GM12878 (cell line): ENCODE measurements at regions of chr1 and their contacts with region 1.

Region 1: DNA sequence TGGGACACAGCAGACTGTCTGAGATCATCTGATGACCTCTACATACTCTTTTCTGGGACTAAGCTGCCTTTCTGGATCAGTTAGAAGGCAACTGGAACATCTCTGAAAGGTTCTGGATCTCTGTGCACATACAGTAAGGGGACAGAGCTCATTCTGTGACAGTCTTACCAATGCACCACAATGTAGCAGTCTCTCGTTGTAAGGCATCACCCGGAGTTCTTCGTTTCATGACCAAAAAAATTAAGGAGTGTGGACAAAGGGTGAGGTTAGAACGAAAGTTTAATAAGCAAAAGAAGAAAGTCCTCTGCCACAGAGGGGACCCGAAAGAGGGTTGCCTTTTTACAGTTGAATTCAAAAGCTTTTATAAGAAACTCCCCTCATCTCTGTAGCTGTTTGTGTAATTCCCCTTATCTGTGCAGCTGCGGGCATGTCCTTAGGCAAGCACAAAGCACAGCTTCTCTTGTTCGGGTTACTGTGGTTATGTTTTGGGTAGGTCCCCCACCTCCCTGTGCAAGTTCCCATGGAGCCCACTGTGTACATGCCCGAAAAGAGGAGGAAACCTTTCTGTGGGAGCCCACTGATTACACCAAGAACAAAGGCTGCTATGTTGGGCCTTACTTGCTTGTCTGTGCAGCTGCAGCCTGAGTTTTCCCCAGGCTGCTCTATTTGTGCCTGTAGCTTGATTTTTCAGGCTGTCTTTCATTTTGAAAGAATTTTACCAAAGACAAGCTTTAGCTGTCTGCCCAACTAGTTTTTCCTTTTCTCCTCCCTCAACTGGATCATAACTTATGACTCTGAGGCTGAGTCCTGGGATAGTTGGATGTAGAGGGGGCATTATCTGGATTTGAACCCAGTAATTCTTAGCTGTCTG is 53.1 kb upstream of the CACNA1E start:
- DNase-seq: peak; percentile 79
- ATAC-seq: peak; percentile 90
- H3K4me3 ChIP-seq: no peak overlapping the region
- H3K27ac ChIP-seq: peak overlapping the region; percentile 83
- H3K4me1 ChIP-seq: peaks cover 39% of the 10 kb centered on the region
- H3K27me3 ChIP-seq: no peaks in the 10 kb centered on the region; a peak in 1 of 4 replicates
- CTCF ChIP-seq: no peak
- EP300 ChIP-seq: peak; percentile 56 to 75
- POLR2A ChIP-seq: no peak
- RAD21 ChIP-seq: no peak

Region 2: DNA sequence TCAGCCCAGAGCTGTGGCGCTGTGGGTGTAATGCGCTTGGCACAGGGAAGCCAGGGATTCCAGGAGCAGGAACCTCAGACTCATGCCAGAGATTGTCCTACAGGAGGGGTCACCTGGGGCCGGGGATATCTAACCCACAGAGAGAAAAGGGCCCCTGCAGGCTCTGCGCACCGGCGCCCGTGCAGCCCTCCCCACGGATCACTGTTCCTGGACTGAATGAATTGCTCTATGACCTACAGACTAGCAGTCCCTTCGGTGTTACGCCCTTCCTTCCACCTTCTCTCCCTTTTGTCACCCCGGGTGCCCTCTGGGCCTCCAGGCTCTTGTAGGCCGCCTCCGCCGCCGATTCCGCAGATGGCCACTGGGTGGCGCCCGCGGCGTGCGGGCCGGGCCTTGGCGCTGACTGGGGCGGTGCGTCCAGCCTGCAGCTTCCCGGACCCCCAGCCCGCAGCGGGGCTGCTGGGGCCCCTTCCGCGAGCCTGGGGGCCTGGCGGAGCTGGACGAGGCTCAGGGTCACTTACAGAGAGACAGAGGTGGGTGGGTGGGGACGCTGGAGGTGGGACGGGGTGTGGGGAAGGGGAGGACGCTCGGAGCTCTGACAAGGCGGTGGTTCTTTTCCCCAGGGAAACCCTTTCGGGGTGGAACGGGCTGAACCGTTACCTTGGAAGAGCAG is 240.4 kb before region 1 on chr1:
- CTCF ChIA-PET with region 1: interaction called, 91 read pairs
- POLR2A ChIA-PET with region 1: interaction called, 7 read pairs
- RAD21 ChIA-PET with region 1: interaction called, 33 read pairs
- SMC1A ChIA-PET with region 1: interaction called, 37 read pairs
- in situ Hi-C with region 1: no loop called
- intact Hi-C with region 1: loop called (anchors 1 kb)
- DNase-seq: no peak
- ATAC-seq: peak; percentile 98
- H3K4me3 ChIP-seq: no peak overlapping the region
- H3K27ac ChIP-seq: no peak overlapping the region
- H3K4me1 ChIP-seq: no peaks in the 10 kb centered on the region
- H3K27me3 ChIP-seq: no peaks in the 10 kb centered on the region
- CTCF ChIP-seq: peak; percentile 95 to 98 (median 97)
- EP300 ChIP-seq: no peak
- POLR2A ChIP-seq: no peak
- RAD21 ChIP-seq: peak; percentile 99

Region 3: GRCh38 chr1:181443231-181443853 is 13.1 kb after region 1 on chr1:
- CTCF ChIA-PET with region 1: interaction called, 43 read pairs
- POLR2A ChIA-PET with region 1: interaction called, 15 read pairs
- RAD21 ChIA-PET with region 1: interaction called, 12 read pairs
- SMC1A ChIA-PET with region 1: interaction called, 10 read pairs
- in situ Hi-C with region 1: no loop called
- intact Hi-C with region 1: no loop called
- DNase-seq: no peak
- ATAC-seq: peak; percentile 59
- H3K4me3 ChIP-seq: no peak overlapping the region
- H3K27ac ChIP-seq: peak overlapping the region; percentile 4; the same call in 1 of the 2 replicates
- H3K4me1 ChIP-seq: peaks cover 10% of the 10 kb centered on the region
- H3K27me3 ChIP-seq: no peaks in the 10 kb centered on the region
- CTCF ChIP-seq: no peak
- EP300 ChIP-seq: no peak
- POLR2A ChIP-seq: no peak
- RAD21 ChIP-seq: no peak

Region 4: DNA sequence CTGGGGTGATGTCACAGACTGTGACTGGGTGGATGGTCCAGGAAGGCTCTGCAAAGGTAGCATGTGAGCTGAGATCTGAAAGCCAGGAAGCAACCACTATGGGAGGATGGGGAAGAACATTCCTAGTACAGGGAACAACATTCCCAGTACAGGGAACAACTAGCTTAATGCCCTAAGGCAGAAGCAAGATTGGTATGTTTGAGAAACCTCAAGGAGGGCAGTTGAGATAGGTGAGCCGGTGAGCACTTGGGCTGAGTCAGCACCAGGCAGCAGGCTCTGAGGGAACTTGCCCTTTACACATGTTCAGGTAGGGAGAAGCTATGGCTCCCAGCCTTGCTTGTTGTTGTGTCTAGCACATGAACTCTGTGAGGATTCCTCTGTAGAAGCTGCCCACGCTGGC is 28.8 kb after region 1 on chr1:
- CTCF ChIA-PET with region 1: interaction called, 6 read pairs
- POLR2A ChIA-PET with region 1: interaction called, 7 read pairs
- RAD21 ChIA-PET with region 1: interaction called, 7 read pairs
- SMC1A ChIA-PET with region 1: interaction called, 32 read pairs
- in situ Hi-C with region 1: no loop called
- intact Hi-C with region 1: no loop called
- DNase-seq: no peak
- ATAC-seq: peak; percentile 18; the same call in 1 of the 3 replicates
- H3K4me3 ChIP-seq: no peak overlapping the region
- H3K27ac ChIP-seq: no peak overlapping the region
- H3K4me1 ChIP-seq: no peaks in the 10 kb centered on the region
- H3K27me3 ChIP-seq: no peaks in the 10 kb centered on the region
- CTCF ChIP-seq: no peak
- EP300 ChIP-seq: no peak
- POLR2A ChIP-seq: no peak
- RAD21 ChIP-seq: no peak

Region 5: DNA sequence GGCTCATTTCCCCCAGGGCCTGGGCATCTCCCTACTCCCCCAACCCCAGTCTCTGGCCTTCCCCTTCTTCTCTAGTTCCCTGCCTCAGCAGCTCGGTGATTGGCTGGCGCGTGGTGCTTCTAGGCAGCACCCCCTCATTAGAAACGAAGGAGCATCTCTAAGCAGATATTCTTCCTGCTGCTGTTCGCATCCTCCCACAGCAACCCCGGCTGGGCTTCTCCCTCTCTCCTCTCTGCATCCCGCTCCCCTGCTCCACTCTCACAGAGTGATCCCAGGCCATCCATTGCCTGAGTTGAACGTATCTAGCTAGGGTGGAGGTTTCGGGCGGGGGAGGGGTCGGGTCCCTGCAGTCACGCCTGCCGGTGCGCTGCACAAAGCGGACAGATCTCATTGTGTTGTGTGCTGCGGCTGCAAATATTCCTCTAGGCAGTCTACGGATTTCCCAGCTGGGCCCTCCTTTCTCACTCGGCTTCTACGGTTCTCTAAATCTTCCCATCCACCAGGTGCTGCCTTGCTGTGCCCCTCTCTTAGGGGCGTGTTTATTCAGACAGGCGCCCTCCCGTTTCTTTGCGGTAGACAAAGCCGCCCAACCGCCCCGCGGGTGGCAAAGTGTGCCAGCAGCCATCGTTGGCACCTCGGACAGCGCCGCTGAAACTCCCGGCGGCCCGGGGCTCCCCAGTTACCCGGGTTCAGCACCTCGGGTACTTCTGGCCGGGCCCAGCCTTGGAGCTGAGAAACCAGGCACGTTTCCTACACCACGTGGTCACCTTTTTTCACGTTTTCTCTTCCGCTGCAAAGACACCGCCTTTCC is 55.2 kb after region 1 on chr1:
- CTCF ChIA-PET with region 1: interaction called, 54 read pairs
- POLR2A ChIA-PET with region 1: interaction called, 38 read pairs
- RAD21 ChIA-PET with region 1: interaction called, 155 read pairs
- SMC1A ChIA-PET with region 1: interaction called, 123 read pairs
- in situ Hi-C with region 1: no loop called
- intact Hi-C with region 1: no loop called
- DNase-seq: peak; percentile 53
- ATAC-seq: peak; percentile 63
- H3K4me3 ChIP-seq: peak overlapping the region; percentile 74
- H3K27ac ChIP-seq: peak overlapping the region; percentile 56
- H3K4me1 ChIP-seq: peaks cover 3% of the 10 kb centered on the region; the same call in 1 of the 2 replicates
- H3K27me3 ChIP-seq: no peaks in the 10 kb centered on the region
- CTCF ChIP-seq: no peak; a peak in 1 of 6 replicates
- EP300 ChIP-seq: no peak
- POLR2A ChIP-seq: no peak; the same call in 1 of the 2 replicates
- RAD21 ChIP-seq: no peak

Region 6: DNA sequence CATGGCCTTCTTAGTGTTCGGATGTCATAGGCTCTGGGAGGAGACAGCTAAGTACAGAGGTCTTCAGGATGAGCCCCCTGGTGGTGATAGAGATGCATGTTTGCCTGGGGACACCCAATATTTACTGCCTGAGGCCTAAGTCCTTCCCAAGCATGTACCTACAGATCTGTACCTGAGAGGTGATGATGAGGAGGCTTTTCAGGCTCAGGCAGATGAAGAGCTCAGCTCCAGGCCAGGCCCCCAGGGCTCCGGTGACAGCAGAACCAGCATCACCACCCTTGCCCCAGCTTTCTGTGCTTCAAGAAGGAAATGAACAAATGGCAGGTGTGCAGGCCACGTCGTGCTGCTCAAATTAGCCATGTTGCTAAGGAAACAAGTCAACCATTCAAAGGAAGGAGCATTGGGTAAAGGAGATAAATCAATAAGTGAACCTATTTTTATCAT is 74.2 kb after region 1 on chr1:
- CTCF ChIA-PET with region 1: interaction called, 5 read pairs
- POLR2A ChIA-PET with region 1: interaction called, 3 read pairs
- RAD21 ChIA-PET with region 1: interaction called, 11 read pairs
- SMC1A ChIA-PET with region 1: interaction called, 10 read pairs
- in situ Hi-C with region 1: no loop called
- intact Hi-C with region 1: no loop called
- DNase-seq: no peak
- ATAC-seq: peak; percentile 77
- H3K4me3 ChIP-seq: peak overlapping the region; percentile 14; the same call in 1 of the 2 replicates
- H3K27ac ChIP-seq: peak overlapping the region; percentile 88
- H3K4me1 ChIP-seq: peaks cover 60% of the 10 kb centered on the region
- H3K27me3 ChIP-seq: no peaks in the 10 kb centered on the region
- CTCF ChIP-seq: peak; percentile 50 to 73 (median 70)
- EP300 ChIP-seq: no peak
- POLR2A ChIP-seq: peak; percentile 42
- RAD21 ChIP-seq: peak; percentile 55

Region 7: GRCh38 chr1:181525104-181525721 is 95.0 kb after region 1 on chr1:
- CTCF ChIA-PET with region 1: no interaction called
- POLR2A ChIA-PET with region 1: no interaction called
- RAD21 ChIA-PET with region 1: no interaction called
- SMC1A ChIA-PET with region 1: no interaction called
- in situ Hi-C with region 1: no loop called
- intact Hi-C with region 1: no loop called
- DNase-seq: no peak
- ATAC-seq: no peak
- H3K4me3 ChIP-seq: no peak overlapping the region
- H3K27ac ChIP-seq: no peak overlapping the region
- H3K4me1 ChIP-seq: peaks cover 11% of the 10 kb centered on the region
- H3K27me3 ChIP-seq: no peaks in the 10 kb centered on the region
- CTCF ChIP-seq: no peak
- EP300 ChIP-seq: no peak
- POLR2A ChIP-seq: no peak
- RAD21 ChIP-seq: no peak